Activated CD4-positive, alpha-beta T cell treated with anti-CD3 and anti-CD28 coated beads, Interleukin-2, amount 10 ng/mL, durations not matched to agents 7 days and 5 days (primary cell): ENCODE measurements at regions of chr11 and their contacts with region 1.

Region 1: DNA sequence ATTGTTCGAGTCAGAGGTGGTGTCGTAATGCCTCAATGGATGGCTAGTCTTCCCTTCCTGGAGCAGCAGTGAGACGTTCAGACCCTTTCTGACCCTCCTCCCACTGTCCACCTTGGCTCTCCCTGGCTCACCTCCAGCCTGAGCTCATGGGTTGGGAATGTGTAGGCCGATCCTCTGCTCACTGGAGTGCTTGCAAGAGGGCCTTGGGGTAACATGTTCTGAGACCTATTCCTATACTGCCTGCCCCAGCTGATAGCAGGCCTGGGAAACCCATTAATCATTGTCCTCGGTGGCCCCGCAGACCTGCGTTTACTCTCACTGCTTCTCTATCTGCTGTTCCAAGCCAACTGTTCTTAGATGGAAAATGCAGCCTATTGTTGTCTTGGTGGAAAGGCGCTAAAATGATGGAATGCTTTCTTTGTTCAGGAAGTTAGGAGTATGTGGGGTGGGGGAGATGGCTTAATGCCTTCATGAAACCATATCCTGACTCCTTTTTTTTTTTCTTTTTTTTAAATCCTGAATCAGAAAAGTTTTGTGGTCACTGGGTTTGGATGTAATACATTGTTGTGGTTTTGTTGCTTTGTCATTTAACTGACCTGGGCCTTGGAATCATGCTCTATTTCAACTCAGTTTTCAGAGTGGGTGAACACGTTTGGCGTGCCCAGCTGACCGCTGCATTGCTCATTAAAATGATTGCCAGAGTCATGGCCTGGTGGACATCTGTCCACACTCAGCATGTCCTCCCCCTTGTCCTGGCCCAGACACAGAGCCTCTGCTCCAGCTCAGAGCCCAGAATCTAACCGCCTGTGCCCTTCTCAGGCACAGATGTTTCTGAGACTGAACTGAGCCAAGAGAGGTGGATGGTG is 72.5 kb downstream of the MICAL2 start:
- DNase-seq: no peak
- H3K4me3 Mint-ChIP-seq: no peak overlapping the region
- H3K27ac Mint-ChIP-seq: no peak overlapping the region
- H3K4me1 Mint-ChIP-seq: peaks cover 37% of the 10 kb centered on the region
- H3K27me3 Mint-ChIP-seq: no peaks in the 10 kb centered on the region

Region 2: DNA sequence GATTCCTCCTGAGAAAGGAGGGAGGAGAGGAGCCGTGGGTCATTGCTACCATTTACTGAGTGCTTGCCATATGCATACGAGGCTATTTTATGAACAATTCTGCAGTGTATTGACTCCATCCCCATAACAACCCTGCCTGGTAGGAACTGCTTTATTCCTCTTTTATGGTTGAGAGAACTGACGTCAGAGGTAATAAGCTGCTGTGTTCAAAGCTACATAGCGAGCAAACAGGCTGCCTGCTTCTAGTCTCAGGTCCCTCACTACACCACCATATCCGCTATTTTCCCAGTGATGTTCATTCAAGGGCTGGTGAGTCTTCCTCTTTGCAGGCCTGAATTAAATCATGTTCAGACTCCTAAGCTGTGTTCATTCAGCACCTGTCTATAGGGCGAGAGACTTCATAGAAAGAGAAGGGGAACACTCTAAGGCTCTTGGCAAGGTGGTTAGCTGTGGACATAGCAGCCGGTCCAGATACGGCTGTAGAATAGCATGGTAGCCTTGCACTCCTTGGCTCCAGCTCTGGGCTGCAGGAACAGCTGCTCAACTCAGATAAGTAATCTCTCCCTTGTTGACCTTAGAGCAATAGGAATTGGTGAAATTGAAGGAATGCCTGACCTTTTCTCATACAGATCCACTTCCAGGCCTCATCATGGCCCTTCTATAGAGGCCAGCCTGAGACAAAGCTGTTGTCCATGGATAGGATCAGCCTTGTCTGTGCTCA is 10.0 kb after region 1 on chr11:
- CTCF ChIA-PET with region 1: interaction called, 53 read pairs
- POLR2A ChIA-PET with region 1: interaction called, 4 read pairs
- DNase-seq: no peak
- H3K4me3 Mint-ChIP-seq: no peak overlapping the region
- H3K27ac Mint-ChIP-seq: peak overlapping the region; percentile 34
- H3K4me1 Mint-ChIP-seq: peaks cover 77% of the 10 kb centered on the region
- H3K27me3 Mint-ChIP-seq: no peaks in the 10 kb centered on the region

Region 3: GRCh38 chr11:12200279-12201010 is 17.5 kb after region 1 on chr11:
- CTCF ChIA-PET with region 1: interaction called, 53 read pairs
- POLR2A ChIA-PET with region 1: interaction called, 4 read pairs
- DNase-seq: no peak
- H3K4me3 Mint-ChIP-seq: no peak overlapping the region
- H3K27ac Mint-ChIP-seq: no peak overlapping the region
- H3K4me1 Mint-ChIP-seq: peaks cover 57% of the 10 kb centered on the region
- H3K27me3 Mint-ChIP-seq: no peaks in the 10 kb centered on the region

Region 4: GRCh38 chr11:12216671-12217374 is 33.9 kb after region 1 on chr11:
- CTCF ChIA-PET with region 1: no interaction called
- POLR2A ChIA-PET with region 1: no interaction called
- DNase-seq: no peak
- H3K4me3 Mint-ChIP-seq: no peak overlapping the region
- H3K27ac Mint-ChIP-seq: no peak overlapping the region
- H3K4me1 Mint-ChIP-seq: peaks cover 26% of the 10 kb centered on the region
- H3K27me3 Mint-ChIP-seq: no peaks in the 10 kb centered on the region

Region 5: DNA sequence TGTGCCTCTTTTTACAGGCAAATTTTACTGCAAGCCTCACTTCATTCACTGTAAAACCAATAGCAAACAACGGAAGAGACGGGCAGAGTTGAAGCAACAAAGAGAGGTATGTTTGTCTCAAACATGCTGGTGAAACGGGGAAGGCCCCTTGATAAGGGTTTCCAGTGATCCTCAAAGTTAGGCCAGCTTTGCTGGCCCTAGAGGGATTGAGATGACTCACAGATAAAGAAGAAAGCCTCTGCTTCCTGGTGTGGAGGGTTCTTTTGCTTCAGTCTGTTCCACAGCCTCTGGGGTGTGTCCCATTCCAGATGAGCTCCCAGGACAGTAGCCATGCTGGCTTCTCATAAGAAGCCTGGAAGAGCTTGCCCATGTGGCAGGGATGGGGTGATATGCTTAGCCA is 75.5 kb after region 1 on chr11:
- CTCF ChIA-PET with region 1: no interaction called
- POLR2A ChIA-PET with region 1: no interaction called
- DNase-seq: no peak
- H3K4me3 Mint-ChIP-seq: no peak overlapping the region
- H3K27ac Mint-ChIP-seq: no peak overlapping the region
- H3K4me1 Mint-ChIP-seq: no peaks in the 10 kb centered on the region
- H3K27me3 Mint-ChIP-seq: no peaks in the 10 kb centered on the region